Activated naive CD8-positive, alpha-beta T cell treated with anti-CD3 and anti-CD28 coated beads, Interleukin-2, amount 10 ng/mL, durations not matched to agents 7 days and 5 days (primary cell): ENCODE measurements at regions of chr6 and their contacts with region 1.

Region 1: DNA sequence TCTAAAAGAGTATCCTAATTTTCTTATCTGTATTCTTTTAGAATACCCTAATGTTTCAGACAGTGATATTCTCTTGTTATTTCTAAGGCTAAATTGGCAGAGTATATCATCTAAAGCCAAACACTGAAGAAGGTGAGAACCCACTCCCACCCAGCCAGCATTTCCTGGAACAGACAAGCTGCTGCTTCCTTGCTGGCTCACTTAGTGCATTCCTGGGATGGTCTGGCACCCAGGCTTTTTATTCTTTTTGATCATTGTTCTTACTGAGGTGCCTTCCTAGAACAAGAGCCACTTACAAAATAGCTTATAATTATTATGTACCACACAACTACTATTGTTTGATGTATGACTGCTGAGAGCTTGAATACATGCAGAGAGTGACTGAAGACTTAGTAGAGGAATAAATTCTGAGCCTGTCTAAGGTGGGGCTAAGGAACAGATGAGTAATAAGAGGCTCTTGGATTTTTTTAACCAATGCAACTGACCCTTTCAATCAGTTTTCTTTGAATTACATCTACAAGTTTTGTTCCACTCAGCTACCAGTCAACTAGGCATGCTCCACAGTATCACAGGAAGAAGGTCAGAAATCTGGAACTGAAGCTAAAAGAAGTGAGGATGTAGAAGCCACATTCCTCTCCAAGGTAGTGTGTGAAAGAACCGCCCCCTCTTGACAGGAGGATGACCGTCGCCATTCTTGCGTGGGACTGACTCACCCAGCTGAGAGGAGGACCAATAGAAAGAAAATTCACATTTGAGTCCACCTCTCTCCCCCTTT is 30.1 kb downstream of the PRPH2 start:
- DNase-seq: no peak
- ATAC-seq: peak; percentile 43
- H3K4me3 Mint-ChIP-seq: peak overlapping the region; percentile 59
- H3K27ac Mint-ChIP-seq: peak overlapping the region; percentile 83
- H3K4me1 Mint-ChIP-seq: peaks cover 39% of the 10 kb centered on the region
- H3K27me3 Mint-ChIP-seq: no peaks in the 10 kb centered on the region

Region 2: DNA sequence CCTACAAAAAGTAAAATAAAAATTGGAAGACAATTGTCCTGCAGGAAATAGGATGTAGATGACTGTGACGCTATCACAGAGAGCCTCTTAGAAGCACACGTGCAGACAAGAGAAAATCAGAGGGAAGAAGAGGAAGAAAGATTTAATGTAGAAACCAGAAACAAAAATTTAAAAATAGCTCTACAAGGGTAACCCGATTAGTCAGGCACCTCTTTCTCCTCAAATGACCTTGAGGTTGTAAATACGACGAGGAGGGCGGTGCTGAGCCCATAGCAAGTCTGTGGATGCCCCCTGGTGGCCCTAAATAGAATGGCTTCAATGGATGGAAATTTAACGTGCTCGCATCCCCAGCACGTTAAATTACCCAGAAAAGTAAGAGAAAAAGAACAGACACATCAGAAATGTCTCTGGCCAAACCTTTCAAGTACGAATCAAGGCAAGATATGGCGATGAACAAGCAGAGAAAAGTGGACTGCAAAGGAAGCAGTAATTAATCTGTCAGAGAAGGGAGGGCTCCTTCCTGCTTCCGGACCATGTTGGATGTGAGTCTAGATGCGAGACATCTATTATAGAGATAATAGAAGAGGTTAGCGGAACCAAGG is 34.3 kb after region 1 on chr6:
- POLR2A ChIA-PET with region 1: interaction called, 12 read pairs
- DNase-seq: peak; percentile 43
- ATAC-seq: peak; percentile 90
- H3K4me3 Mint-ChIP-seq: peak overlapping the region; percentile 89
- H3K27ac Mint-ChIP-seq: peak overlapping the region; percentile 88
- H3K4me1 Mint-ChIP-seq: peaks cover 13% of the 10 kb centered on the region
- H3K27me3 Mint-ChIP-seq: peaks cover 1% of the 10 kb centered on the region